HepG2 (cell line): ENCODE measurements at regions of chr16 and their contacts with region 1.

Region 1: GRCh38 chr16:3696425-3697218 is 20.7 kb downstream of the TRAP1 start:
- DNase-seq: peak; percentile 68
- ATAC-seq: peak; percentile 34
- H3K4me3 ChIP-seq: peak overlapping the region; percentile 67 to 76 (median 74)
- H3K27ac ChIP-seq: peak overlapping the region; percentile 98
- H3K4me1 ChIP-seq: peaks cover 50% of the 10 kb centered on the region
- H3K27me3 ChIP-seq: no peaks in the 10 kb centered on the region; a peak in 1 of 5 replicates
- CTCF ChIP-seq: no peak
- EP300 ChIP-seq: no peak
- POLR2A ChIP-seq: 0 out of 4 replicates have a peak, but pooled peaks of 1 of the 2 experiments have one; percentile 23
- RAD21 ChIP-seq: no peak

Region 2: DNA sequence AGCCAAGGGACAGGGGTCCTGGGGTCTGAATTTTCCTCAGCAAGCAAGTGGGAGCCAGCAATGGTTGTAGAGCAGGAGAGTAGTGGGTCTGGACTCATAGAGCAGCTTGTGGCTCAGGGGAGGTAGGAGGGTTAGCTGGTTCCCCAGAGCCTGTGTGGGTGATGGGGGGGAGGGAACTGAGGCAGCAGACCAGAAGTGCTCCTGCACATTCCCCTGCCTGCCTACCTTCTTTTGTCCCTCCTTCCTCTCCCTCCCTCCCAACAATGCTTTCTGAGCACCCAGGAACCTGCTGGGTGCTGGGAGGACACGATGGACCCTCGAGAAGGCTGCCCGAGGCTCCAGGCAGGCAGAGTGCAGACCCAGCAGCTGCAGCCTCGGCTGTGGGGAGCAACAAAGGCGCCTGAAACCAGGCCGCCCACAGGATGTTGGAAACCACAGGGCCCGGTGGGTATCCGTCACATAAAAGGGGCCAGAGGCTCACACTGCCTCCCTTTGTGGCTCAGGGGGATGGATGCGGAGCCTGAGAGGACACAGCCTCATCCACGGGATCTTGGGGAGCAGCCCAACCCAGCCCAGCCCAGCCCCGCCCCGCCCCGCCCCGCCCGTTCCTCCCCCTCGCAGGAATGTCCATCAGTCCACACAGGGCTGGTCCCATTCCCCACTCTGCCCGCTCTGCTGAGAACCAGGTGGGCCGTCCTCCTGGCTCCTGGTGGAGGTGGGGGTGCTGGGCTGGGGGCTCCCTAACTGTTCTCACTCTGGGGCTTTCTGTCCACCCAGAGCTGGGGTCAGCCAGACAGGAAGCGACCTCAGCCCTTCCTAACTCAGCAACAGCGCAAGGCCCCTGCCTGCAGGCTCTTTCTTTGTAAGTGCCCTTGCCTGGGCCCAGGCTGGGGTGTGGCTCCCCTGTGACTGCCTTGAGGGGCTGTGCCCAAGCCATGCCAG is 117.7 kb before region 1 on chr16:
- CTCF ChIA-PET with region 1: no interaction called
- POLR2A ChIA-PET with region 1: no interaction called
- in situ Hi-C with region 1: no loop called
- intact Hi-C with region 1: no loop called
- DNase-seq: no peak
- ATAC-seq: peak; percentile 17; the same call in 2 of the 3 replicates
- H3K4me3 ChIP-seq: no peak overlapping the region; a peak in 1 of 6 replicates
- H3K27ac ChIP-seq: no peak overlapping the region
- H3K4me1 ChIP-seq: 0 out of 2 replicates have a peak, but pooled peaks cover 15% of the 10 kb centered on the region
- H3K27me3 ChIP-seq: peaks cover 3 to 8% of the 10 kb centered on the region in 2 experiments; a peak in 4 of 5 replicates
- CTCF ChIP-seq: no peak
- EP300 ChIP-seq: no peak
- POLR2A ChIP-seq: no peak
- RAD21 ChIP-seq: no peak

Region 3: DNA sequence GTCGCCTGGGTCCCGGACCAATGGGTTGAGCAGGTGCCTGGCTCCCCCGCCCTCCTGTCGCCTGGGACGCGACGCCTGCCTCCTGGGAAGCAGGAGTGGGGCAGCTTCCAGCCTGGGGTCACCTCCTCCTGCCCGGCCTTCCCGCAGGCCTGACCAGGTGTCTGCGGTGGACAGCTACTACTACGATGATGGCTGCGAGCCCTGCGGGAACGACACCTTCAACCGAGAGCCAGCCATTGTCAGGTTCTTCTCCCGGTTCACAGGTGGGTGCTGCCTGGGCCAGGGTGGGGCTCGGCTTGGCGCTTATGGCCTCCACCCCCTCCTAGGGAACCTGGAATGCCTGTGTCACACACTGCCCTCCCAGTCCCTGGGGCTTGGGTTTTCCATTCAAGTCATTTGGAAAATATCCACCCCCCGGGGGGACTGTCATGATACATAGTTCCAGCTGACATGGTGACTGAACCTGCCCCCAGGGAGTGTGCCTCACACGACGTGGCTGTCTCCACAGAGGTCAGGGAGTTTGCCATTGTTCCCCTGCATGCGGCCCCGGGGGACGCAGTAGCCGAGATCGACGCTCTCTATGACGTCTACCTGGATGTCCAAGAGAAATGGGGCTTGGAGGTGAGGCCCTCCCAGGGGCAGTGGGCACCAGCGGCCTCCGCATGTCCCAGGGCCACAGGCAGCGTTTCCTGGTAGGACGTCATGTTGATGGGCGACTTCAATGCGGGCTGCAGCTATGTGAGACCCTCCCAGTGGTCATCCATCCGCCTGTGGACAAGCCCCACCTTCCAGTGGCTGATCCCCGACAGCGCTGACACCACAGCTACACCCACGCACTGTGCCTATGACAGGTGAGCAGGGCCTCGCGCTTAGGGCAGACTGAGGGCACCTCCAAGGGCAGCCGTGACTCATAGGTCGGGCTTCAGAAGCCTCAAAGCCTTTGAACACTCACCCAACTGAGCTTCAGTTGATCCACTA is 39.8 kb before region 1 on chr16:
- CTCF ChIA-PET with region 1: no interaction called
- POLR2A ChIA-PET with region 1: no interaction called
- in situ Hi-C with region 1: no loop called
- intact Hi-C with region 1: loop called (anchors 2 kb)
- DNase-seq: no peak
- ATAC-seq: no peak
- H3K4me3 ChIP-seq: no peak overlapping the region
- H3K27ac ChIP-seq: no peak overlapping the region
- H3K4me1 ChIP-seq: peaks cover 42% of the 10 kb centered on the region
- H3K27me3 ChIP-seq: no peaks in the 10 kb centered on the region
- CTCF ChIP-seq: no peak
- EP300 ChIP-seq: no peak
- POLR2A ChIP-seq: peak in 1 of 2 experiments; percentile 18; a peak in 1 of 4 replicates
- RAD21 ChIP-seq: no peak

Region 4: DNA sequence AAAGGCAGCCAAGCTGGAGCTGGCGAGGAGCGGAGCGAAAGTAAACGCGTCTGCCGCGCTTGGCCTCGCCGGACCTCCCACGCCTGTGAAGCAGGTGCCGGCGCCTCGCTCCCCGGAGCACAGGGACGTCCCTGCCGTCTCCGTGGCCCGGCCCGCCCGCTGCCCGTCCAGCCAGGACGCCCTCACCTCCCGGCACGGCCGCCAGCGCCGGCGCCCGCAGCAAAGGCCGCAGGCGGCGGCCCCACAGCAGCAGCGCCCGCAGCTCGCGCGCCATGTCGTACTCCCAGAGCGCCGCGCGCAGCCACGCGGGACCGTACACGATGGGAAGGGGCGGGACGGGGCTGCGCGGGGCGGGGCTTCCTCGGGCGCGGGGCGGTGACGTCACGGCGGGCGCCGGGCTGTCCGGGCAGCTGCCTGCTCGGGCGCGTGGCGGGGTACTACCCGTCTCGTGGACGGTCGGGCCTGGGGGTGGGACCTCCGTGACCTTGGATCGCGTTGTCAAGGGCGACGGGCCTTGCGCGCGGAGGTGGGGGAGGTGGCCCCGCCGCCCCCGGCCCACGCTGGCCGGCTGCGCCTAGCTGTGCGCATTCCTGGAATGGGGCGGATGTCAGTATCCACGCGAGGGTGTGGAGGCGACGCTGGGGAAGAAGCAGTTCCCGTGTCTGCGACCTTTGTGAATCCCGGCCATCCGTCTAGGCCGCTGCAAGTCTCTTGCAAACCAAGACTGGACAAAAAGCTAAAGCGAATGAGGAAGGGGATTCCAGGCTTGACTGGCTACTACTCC is 20.8 kb after region 1 on chr16 and contains the start of gene TRAP1:
- CTCF ChIA-PET with region 1: no interaction called
- POLR2A ChIA-PET with region 1: interaction called, 144 read pairs
- in situ Hi-C with region 1: no loop called
- intact Hi-C with region 1: loop called (anchors 2 kb)
- DNase-seq: peak; percentile 50
- ATAC-seq: peak; percentile 76
- H3K4me3 ChIP-seq: peak within 1 kb of the TSS; percentile 77 to 98 (median 93)
- H3K27ac ChIP-seq: peak within 1 kb of the TSS; percentile 73
- H3K4me1 ChIP-seq: peaks cover 58% of the 10 kb centered on the region
- H3K27me3 ChIP-seq: peaks cover 0 to 2% of the 10 kb centered on the region in 2 experiments; a peak in 1 of 5 replicates
- CTCF ChIP-seq: peak; percentile 8; the same call in 1 of the 2 replicates
- EP300 ChIP-seq: no peak
- POLR2A ChIP-seq: peak; percentile 78 to 92
- RAD21 ChIP-seq: peak; percentile 34; the same call in 1 of the 2 replicates
- total RNA-seq, gene TRAP1: 112 and 127 TPM in 2 replicates

Region 5: DNA sequence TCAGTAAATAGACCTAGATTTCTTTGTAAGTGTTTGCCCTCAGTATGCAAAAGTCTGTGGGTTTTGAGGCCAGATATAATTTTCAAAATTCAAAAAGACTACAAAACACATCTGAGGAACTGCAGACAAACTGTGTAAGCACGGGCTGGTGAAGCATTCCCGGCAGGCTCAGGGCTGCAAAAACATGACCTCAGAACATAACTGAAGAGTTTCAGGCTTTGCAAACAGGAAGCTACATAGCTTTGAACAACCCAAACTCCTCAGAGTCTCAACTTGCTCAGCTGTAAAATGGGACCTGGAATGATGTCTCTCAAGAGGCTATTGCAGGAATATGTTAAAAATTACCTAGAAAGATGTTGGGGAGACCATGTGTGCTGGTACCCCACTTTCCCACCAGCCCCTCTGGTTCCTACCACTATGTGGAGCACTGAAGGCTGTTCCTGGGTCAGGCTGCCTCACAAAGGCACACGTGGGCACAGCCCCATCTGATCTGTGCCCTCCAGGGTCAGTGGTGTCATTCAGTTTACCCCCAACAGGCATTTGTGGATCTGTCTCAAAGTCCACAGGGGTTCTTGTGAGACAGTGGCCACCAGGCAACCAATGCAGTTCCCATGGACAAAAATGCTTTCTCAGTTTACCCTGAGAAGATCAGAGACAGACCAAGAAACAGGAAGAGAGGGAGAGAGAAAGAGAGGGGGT is 111.0 kb after region 1 on chr16:
- CTCF ChIA-PET with region 1: no interaction called
- POLR2A ChIA-PET with region 1: no interaction called
- in situ Hi-C with region 1: no loop called
- intact Hi-C with region 1: no loop called
- DNase-seq: no peak
- ATAC-seq: no peak
- H3K4me3 ChIP-seq: no peak overlapping the region
- H3K27ac ChIP-seq: no peak overlapping the region
- H3K4me1 ChIP-seq: peaks cover 15% of the 10 kb centered on the region; the same call in 1 of the 2 replicates
- H3K27me3 ChIP-seq: no peaks in the 10 kb centered on the region
- CTCF ChIP-seq: no peak
- EP300 ChIP-seq: no peak
- POLR2A ChIP-seq: no peak
- RAD21 ChIP-seq: no peak